Dendritic cell treated with granulocyte-macrophage colony-stimulating factor and Interleukin-4, amounts not matched to agents 40 ng/mL and 50 ng/mL, for 4 days (primary cell): ENCODE measurements at regions of chr1 and their contacts with region 1.

Region 1: GRCh38 chr1:183580281-183580682 is 10.0 kb downstream of the NCF2 start:
- H3K4me3 Mint-ChIP-seq: peak overlapping the region; percentile 50
- H3K27ac Mint-ChIP-seq: peak overlapping the region; percentile 95
- H3K4me1 Mint-ChIP-seq: peaks cover 92% of the 10 kb centered on the region
- H3K27me3 Mint-ChIP-seq: no peaks in the 10 kb centered on the region

Region 2: DNA sequence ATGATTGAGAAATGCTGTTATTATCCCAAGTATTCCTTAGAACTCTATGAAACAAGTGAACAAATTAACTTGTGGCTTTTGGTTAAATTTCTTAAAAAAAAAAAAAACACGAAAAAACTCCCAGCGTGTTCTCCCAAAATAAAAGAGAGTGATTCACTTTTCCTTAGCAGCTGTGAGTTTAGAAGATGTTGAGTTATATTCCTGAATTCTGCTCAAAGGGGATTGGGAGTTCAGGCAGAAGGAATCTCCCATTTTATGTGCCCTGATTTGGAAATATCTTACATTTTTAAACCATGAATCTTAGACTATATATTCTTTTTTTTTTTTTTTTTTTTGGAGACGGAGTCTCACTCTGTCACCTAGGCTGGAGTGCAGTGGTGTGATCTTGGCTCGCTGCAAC is 73.7 kb before region 1 on chr1:
- intact Hi-C with region 1: no loop called
- H3K4me3 Mint-ChIP-seq: no peak overlapping the region
- H3K27ac Mint-ChIP-seq: no peak overlapping the region
- H3K4me1 Mint-ChIP-seq: peaks cover 6% of the 10 kb centered on the region
- H3K27me3 Mint-ChIP-seq: no peaks in the 10 kb centered on the region

Region 3: GRCh38 chr1:183567584-183567983 is 12.7 kb before region 1 on chr1:
- intact Hi-C with region 1: loop called (anchors 1 kb)
- H3K4me3 Mint-ChIP-seq: peak overlapping the region; percentile 14
- H3K27ac Mint-ChIP-seq: peak overlapping the region; percentile 86
- H3K4me1 Mint-ChIP-seq: peaks cover 87% of the 10 kb centered on the region
- H3K27me3 Mint-ChIP-seq: no peaks in the 10 kb centered on the region

Region 4: GRCh38 chr1:183590244-183591191 is 10.2 kb after region 1 on chr1 and contains the start of gene NCF2:
- intact Hi-C with region 1: loop called (anchors 1 kb)
- H3K4me3 Mint-ChIP-seq: peak within 1 kb of the TSS; percentile 93
- H3K27ac Mint-ChIP-seq: peak within 1 kb of the TSS; percentile 95
- H3K4me1 Mint-ChIP-seq: peaks cover 48% of the 10 kb centered on the region
- H3K27me3 Mint-ChIP-seq: no peaks in the 10 kb centered on the region

Region 5: DNA sequence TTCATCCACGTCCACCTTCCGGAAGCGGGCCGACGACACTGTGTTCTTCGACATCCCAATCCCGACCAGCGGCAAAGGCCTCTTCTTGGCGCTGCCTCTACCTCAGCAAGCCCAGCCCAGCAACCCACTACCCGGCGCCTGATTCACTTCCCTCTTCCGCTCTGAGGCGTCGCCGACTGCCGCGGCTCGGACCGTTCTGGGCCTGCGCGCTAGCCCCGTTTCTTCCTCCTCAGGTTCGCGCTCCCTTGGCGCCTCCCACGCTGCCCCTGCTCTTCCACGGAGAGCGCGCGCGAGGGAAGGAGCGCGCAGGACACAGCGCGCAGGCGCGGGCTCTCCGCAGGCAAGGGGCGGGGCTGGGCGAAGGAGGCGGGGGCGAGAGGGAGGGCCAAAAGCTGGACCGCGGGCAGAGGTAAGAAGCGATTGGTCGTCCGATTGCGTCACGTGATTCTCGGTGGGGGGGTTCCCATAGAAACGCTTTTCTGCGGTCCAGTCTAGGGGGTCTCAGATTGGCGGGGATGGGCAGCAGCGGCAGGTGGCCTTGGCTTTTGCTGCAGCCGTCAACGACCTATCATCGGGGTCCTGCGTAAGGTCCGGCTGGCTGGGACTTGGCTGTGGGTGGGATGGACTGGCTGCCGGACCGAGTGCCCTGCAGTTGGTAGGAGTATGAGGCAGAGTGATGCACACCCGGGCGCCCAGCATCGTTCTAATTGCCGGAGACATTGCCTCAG is 55.5 kb after region 1 on chr1 and contains the start of gene ARPC5:
- intact Hi-C with region 1: loop called (anchors 5 kb)
- H3K4me3 Mint-ChIP-seq: peak within 1 kb of the TSS; percentile 99
- H3K27ac Mint-ChIP-seq: peak within 1 kb of the TSS; percentile 98
- H3K4me1 Mint-ChIP-seq: peaks cover 27% of the 10 kb centered on the region
- H3K27me3 Mint-ChIP-seq: peaks cover 2% of the 10 kb centered on the region

Region 6: DNA sequence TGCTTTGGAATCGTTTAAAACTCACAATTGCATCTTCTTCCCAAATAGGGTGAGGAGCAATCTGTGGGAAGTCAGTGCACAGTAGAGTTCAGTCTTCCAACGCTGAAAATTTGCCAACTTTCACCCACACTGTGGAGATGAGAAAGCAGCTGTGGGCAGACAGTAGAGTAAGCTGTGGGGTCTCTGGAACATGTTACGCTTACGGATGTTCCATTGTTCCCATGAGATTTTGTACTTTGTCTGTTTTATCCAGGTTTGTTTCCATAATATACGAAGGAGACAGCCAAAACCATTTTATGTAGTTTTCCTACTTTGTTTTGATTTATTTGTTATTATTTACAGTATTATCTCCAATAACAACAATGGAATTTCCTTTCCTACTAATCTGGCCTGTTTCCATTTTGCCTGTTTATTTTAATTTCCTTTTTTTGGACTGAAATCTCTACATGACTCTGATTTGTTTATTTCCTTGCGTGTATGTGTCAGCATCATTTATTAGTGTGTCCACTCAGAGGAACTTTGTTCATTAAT is 159.5 kb after region 1 on chr1:
- intact Hi-C with region 1: no loop called
- H3K4me3 Mint-ChIP-seq: no peak overlapping the region
- H3K27ac Mint-ChIP-seq: no peak overlapping the region
- H3K4me1 Mint-ChIP-seq: peaks cover 8% of the 10 kb centered on the region
- H3K27me3 Mint-ChIP-seq: peaks cover 6% of the 10 kb centered on the region

Region 7: DNA sequence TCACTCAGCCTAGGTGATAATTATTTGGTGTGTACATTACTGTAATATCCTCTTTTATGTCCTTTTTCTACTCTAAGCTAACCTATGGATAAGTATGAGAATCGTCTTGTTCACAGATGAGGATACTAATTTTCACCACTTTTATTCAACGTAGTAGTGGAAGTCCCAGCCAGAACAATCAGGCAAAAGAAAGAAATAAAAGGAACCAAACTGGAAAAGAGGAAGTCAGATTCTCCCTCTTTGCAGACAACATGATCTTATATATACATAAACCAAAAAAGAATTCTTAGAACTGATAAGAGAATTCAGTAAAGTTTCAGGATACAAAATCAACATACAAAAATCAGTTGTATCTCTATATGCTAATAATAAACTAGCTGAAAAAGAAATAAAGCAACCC is 212.0 kb after region 1 on chr1:
- intact Hi-C with region 1: no loop called
- H3K4me3 Mint-ChIP-seq: peak overlapping the region; percentile 4
- H3K27ac Mint-ChIP-seq: peak overlapping the region; percentile 21
- H3K4me1 Mint-ChIP-seq: peaks cover 29% of the 10 kb centered on the region
- H3K27me3 Mint-ChIP-seq: peaks cover 7% of the 10 kb centered on the region